CD4-positive, alpha-beta T cell (primary cell): ENCODE measurements at regions of chr10 and their contacts with region 1.

Region 1: DNA sequence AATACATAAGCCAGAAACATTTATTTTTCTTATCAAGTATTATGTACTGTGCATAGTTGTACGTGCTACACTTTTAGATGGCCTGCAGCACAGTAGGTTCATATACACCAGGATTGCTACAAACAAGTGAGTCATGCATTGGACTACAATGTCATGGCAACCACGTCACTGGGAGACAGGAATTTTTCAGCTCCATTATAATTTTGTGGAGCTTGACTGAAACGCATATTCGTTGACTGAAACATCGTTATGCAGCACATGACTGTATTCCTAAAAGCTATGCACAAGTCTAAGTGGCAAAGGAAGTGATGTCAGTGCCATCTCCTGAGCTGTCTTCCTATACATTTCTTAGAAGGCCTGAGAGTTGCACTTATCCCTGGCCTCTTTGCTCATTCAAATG is 871.8 kb downstream of the IPMK start:
- DNase-seq: no peak
- ATAC-seq: no peak
- H3K4me3 ChIP-seq: no peak overlapping the region
- H3K4me3 Mint-ChIP-seq: no peak overlapping the region
- H3K27ac ChIP-seq: no peak overlapping the region
- H3K27ac Mint-ChIP-seq: no peak overlapping the region
- H3K4me1 ChIP-seq: no peaks in the 10 kb centered on the region
- H3K4me1 Mint-ChIP-seq: no peaks in the 10 kb centered on the region
- H3K27me3 ChIP-seq: no peaks in the 10 kb centered on the region
- H3K27me3 Mint-ChIP-seq: no peaks in the 10 kb centered on the region
- CTCF ChIP-seq: no peak

Region 2: GRCh38 chr10:57430376-57430775 is 34.5 kb after region 1 on chr10:
- CTCF ChIA-PET with region 1: no interaction called
- POLR2A ChIA-PET with region 1: no interaction called
- intact Hi-C with region 1: loop called in 1 of 2 experiments (anchors 1 kb)
- DNase-seq: no peak
- ATAC-seq: no peak
- H3K4me3 ChIP-seq: no peak overlapping the region
- H3K4me3 Mint-ChIP-seq: no peak overlapping the region
- H3K27ac ChIP-seq: no peak overlapping the region
- H3K27ac Mint-ChIP-seq: no peak overlapping the region
- H3K4me1 ChIP-seq: no peaks in the 10 kb centered on the region
- H3K4me1 Mint-ChIP-seq: no peaks in the 10 kb centered on the region
- H3K27me3 ChIP-seq: no peaks in the 10 kb centered on the region
- H3K27me3 Mint-ChIP-seq: no peaks in the 10 kb centered on the region
- CTCF ChIP-seq: no peak